ENCODE measurements at regions of chr15 and their contacts with region 1.

Region 1: GRCh38 chr15:52227456-52227855 is 36.3 kb upstream of the GNB5 start:
- DNase-seq: no peak
- ATAC-seq: peak; percentile 83

Region 2: GRCh38 chr15:52179278-52180195 is 47.9 kb before region 1 on chr15:
- intact Hi-C with region 1: loop called (anchors 5 kb)
- DNase-seq: peak; percentile 87
- ATAC-seq: peak; percentile 90

Region 3: DNA sequence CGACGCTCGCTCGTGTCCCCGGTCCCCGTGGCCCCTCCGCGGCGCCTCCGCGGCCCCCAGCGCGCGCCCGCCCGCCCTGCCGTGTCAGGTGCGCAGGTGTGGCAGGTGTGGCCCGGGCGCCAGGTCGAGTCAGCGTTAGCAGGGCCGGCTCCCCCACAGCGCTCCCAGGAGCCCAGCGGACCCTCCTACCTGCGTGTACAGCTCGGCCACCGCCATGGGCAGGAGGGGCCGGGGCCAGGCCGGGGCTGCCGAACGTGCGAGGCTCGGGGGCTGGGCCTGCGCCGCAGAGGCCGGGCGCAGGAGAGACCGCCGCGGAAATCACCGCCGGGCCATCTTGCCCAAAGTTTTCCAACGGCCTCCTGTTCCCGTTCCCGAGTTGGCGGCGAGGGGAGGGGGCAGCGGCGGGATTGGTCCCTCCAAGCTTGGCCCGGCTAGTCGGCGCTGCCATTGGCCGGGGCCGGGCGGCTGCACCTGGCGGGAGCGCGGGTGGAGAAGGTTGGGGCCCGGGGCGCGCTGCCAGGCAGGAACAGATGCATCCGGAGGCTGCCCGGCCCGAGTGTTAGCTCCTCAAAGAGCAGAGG is 68.1 kb after region 1 on chr15 and contains the start of gene MYO5C:
- intact Hi-C with region 1: no loop called
- DNase-seq: peak; percentile 88
- ATAC-seq: peak; percentile 88
- total RNA-seq, gene MYO5C: 3.4 TPM

Measured in Right ventricle myocardium inferior (tissue), 1 donor.